A673 (cell line): ENCODE measurements at regions of chr5 and their contacts with region 1.

Region 1: GRCh38 chr5:168147568-168148360 is 143.7 kb upstream of the WWC1 start:
- DNase-seq: no peak
- H3K4me3 ChIP-seq: no peak overlapping the region
- H3K27ac ChIP-seq: no peak overlapping the region
- H3K4me1 ChIP-seq: no peaks in the 10 kb centered on the region
- H3K27me3 ChIP-seq: no peaks in the 10 kb centered on the region
- CTCF ChIP-seq: no peak

Region 2: GRCh38 chr5:168135897-168136296 is 11.9 kb before region 1 on chr5:
- CTCF ChIA-PET with region 1: no interaction called
- POLR2A ChIA-PET with region 1: interaction called, 12 read pairs
- intact Hi-C with region 1: no loop called
- DNase-seq: no peak
- H3K4me3 ChIP-seq: no peak overlapping the region
- H3K27ac ChIP-seq: no peak overlapping the region
- H3K4me1 ChIP-seq: peaks cover 21% of the 10 kb centered on the region
- H3K27me3 ChIP-seq: no peaks in the 10 kb centered on the region
- CTCF ChIP-seq: no peak